Left ventricle myocardium superior (tissue), 1 donor: ENCODE measurements at regions of chr9 and their contacts with region 1.

Region 1: GRCh38 chr9:110069326-110070248 is 138.4 kb downstream of the C9orf152 start:
- DNase-seq: no peak
- ATAC-seq: peak; percentile 47

Region 2: DNA sequence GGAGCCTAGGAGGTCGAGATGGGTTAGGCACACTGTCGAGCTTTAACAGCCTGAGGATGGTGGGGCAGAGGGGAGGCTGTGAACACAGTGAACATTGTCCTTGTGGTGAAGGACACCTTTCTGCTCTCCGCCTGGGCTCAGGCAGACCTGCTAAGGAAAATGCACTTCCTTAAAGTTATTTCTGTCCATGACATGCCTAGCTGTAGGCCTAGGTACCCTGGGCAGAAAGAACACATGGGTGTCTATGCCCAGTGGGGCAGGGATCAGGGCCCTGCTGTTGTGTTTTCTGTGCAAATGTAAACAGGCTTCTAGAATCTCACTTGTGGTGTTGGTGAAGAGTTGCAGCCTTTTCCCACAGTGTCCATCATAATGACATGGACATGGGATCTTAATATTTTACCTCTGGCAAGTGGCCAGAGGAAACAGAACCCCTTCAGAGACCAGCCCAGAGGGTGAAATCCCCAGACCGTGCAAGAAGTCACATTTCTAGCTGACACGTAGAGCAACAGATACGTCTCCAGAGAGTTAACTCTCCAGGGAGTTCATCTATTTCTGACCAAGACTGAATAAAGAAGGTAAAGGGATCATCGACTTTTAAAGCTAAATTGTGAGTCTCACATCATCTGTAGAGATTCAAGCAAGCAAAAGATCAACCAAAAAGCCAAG is 59.2 kb after region 1 on chr9:
- intact Hi-C with region 1: no loop called
- DNase-seq: no peak
- ATAC-seq: peak; percentile 1

Region 3: DNA sequence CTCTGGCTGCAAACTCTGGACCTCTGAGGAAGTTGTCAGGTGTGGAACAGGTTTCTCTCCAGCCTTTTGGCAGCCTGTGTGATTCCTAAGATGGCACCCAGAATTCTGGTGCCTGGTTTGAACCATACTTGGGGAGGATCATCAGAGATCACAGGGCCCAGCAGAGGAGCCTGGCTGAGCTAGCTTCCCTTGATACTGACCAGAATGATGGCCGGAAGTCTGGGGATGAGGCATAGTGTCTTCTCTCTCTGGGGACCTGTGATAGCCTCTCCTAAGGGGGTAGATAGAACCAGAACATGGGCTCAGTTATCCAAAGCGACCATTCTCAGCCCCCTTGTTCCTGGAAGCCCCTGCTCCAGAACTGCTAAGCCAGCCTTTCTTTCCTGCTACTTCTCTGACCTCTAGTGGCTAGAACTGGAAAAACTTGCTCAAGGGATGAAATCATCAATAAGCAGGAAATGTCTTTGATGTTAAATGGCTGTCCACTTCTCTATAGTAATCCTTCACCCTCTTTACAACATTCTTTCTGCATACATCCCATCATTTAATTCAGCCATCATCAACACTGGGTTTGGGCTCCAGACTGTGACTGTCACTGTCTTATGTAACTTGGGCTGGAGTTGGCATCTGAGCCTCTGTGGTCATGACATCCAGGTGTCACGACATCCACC is 83.3 kb after region 1 on chr9:
- intact Hi-C with region 1: loop called (anchors 10 kb)
- DNase-seq: no peak
- ATAC-seq: peak; percentile 14

Region 4: DNA sequence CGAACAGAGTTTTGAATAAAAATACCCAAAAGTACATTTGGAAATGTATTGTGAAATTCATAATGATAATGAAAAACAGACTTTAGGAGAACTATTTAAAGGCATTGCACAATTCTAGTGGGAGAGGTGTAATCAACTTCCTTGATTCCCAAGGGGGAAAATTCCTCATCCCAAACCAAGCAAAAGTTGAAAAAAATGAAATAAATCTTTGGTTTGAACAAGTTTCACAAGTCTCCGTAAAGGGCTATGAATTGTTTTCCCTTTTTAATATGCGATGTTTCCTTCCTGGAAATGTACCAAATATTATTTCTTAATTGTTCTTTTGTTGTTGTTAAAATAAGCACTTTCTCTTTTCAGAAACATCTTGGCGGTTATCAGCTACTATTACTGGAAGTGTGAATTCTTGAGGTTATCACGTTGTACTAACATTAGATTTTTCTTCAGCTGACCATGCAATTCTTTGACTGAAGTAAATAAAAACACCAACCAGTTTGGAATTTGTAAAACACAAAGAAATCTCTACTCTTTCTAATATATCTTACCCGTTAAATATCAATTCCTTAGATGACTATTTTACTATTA is 450.6 kb after region 1 on chr9:
- intact Hi-C with region 1: no loop called
- DNase-seq: no peak
- ATAC-seq: peak; percentile 74